ENCODE measurements at regions of chr1 and their contacts with region 1.

Region 1: GRCh38 chr1:84753516-84754385 is 63.5 kb upstream of the SSX2IP start:
- DNase-seq: peak; percentile 82
- H3K4me3 ChIP-seq: peak overlapping the region in 1 of 2 experiments; percentile 24; a peak in 1 of 4 replicates
- H3K27ac ChIP-seq: no peak overlapping the region
- H3K4me1 ChIP-seq: peaks cover 0 to 3% of the 10 kb centered on the region in 2 experiments; a peak in 1 of 4 replicates
- H3K27me3 ChIP-seq: no peaks in the 10 kb centered on the region
- CTCF ChIP-seq: peak; percentile 99
- EP300 ChIP-seq: no peak
- RAD21 ChIP-seq: peak; percentile 99

Region 2: GRCh38 chr1:84442256-84442655 is 311.5 kb before region 1 on chr1:
- CTCF ChIA-PET with region 1: interaction called, 20 read pairs
- POLR2A ChIA-PET with region 1: no interaction called
- DNase-seq: peak; percentile 18
- H3K4me3 ChIP-seq: no peak overlapping the region
- H3K27ac ChIP-seq: 0 out of 4 replicates have a peak overlapping the region, but pooled peaks of 1 of the 2 experiments have one; percentile 10
- H3K4me1 ChIP-seq: 0 out of 4 replicates have a peak, but pooled peaks cover 0 to 5% of the 10 kb centered on the region in 2 experiments
- H3K27me3 ChIP-seq: no peaks in the 10 kb centered on the region
- CTCF ChIP-seq: peak; percentile 77
- EP300 ChIP-seq: no peak
- RAD21 ChIP-seq: peak; percentile 74

Region 3: DNA sequence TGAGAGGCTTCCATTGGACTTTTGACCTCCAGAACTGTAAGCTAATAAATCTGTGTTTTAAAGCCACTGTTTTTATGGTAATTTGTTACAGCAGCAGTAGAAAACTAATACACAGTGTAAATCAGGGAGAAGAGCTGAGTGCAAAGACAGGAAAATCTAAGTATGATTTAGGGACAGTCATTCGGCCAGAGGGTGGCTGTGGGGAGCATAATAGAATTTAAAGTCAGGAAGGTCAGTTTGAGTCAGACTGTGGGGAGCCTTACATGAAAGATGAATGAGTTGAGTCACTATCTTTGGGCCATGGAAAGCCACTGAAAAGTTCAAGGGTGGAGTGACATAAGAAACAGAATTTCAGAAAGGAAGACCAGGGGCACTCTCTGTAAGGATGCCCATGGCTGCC is 11.1 kb before region 1 on chr1:
- CTCF ChIA-PET with region 1: interaction called, 25 read pairs
- POLR2A ChIA-PET with region 1: no interaction called
- DNase-seq: no peak
- H3K4me3 ChIP-seq: no peak overlapping the region
- H3K27ac ChIP-seq: no peak overlapping the region
- H3K4me1 ChIP-seq: no peaks in the 10 kb centered on the region
- H3K27me3 ChIP-seq: no peaks in the 10 kb centered on the region
- CTCF ChIP-seq: no peak
- EP300 ChIP-seq: no peak
- RAD21 ChIP-seq: no peak

Region 4: GRCh38 chr1:84772428-84772943 is 18.7 kb after region 1 on chr1:
- CTCF ChIA-PET with region 1: interaction called, 77 read pairs
- POLR2A ChIA-PET with region 1: no interaction called
- DNase-seq: peak; percentile 78
- H3K4me3 ChIP-seq: no peak overlapping the region; a peak in 1 of 4 replicates
- H3K27ac ChIP-seq: no peak overlapping the region
- H3K4me1 ChIP-seq: peaks cover 0 to 5% of the 10 kb centered on the region in 2 experiments; a peak in 1 of 4 replicates
- H3K27me3 ChIP-seq: no peaks in the 10 kb centered on the region
- CTCF ChIP-seq: peak; percentile 96
- EP300 ChIP-seq: no peak
- RAD21 ChIP-seq: peak; percentile 96

Region 5: GRCh38 chr1:84834419-84835064 is 80.8 kb after region 1 on chr1:
- CTCF ChIA-PET with region 1: no interaction called
- POLR2A ChIA-PET with region 1: no interaction called
- DNase-seq: no peak
- H3K4me3 ChIP-seq: no peak overlapping the region
- H3K27ac ChIP-seq: no peak overlapping the region
- H3K4me1 ChIP-seq: no peaks in the 10 kb centered on the region
- H3K27me3 ChIP-seq: peaks cover 15% of the 10 kb centered on the region; the same call in 1 of the 2 replicates
- CTCF ChIP-seq: no peak
- EP300 ChIP-seq: no peak
- RAD21 ChIP-seq: no peak

Measured in SK-N-SH (cell line).